ENCODE measurements at regions of chr11 and their contacts with region 1.

Region 1: DNA sequence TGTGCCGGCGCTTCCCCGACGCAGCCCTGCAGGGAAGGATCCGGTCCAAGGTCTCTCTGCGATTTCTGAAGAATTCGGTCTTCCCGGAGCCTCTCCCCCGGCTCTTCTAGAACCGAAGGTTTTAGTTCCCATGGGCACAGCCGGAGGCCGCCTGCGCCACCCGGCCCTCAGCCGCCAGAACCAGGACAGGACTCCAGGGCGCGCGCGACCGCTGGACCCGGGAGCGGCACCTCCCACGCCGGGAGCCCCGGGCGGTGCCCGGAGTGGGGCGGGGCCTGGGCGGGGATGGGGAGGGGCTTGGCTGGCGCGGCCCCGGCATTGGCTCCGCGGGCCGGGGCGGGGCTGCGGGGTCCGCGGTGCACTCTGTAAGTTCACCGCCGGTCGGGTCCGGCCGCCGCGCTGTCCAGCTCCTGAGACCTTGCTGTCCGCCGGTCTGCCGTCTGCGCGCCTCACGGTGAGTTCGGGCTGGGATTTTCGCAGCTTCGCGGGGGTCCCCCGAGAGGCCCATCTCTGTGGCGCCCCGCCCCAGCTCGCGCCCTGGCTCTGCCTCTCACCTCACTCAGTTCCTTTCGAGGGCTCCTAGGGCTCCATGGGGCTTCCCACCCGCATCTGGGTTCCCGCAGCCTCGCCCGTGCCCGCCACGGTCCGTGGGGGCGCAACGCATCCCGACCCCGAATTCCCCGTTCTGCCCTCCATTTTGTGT is at the start of gene CDC42EP2:
- DNase-seq: peak; percentile 51 to 71 (median 58)
- H3K4me3 ChIP-seq: peak within 1 kb of the TSS; percentile 73 to 74
- H3K4me3 Mint-ChIP-seq: peak within 1 kb of the TSS; percentile 72 to 83 (median 76)
- H3K27ac ChIP-seq: peak within 1 kb of the TSS; percentile 49
- H3K27ac Mint-ChIP-seq: peak within 1 kb of the TSS in 1 of 7 donors; percentile 44
- H3K4me1 ChIP-seq: peaks cover 15% of the 10 kb centered on the region
- H3K4me1 Mint-ChIP-seq: peaks cover 4 to 14% (median 7%) of the 10 kb centered on the region in 4 donors
- H3K27me3 ChIP-seq: no peaks in the 10 kb centered on the region
- H3K27me3 Mint-ChIP-seq: no peaks in the 10 kb centered on the region
- total RNA-seq, gene CDC42EP2: 0.55 to 0.67 TPM

Region 2: DNA sequence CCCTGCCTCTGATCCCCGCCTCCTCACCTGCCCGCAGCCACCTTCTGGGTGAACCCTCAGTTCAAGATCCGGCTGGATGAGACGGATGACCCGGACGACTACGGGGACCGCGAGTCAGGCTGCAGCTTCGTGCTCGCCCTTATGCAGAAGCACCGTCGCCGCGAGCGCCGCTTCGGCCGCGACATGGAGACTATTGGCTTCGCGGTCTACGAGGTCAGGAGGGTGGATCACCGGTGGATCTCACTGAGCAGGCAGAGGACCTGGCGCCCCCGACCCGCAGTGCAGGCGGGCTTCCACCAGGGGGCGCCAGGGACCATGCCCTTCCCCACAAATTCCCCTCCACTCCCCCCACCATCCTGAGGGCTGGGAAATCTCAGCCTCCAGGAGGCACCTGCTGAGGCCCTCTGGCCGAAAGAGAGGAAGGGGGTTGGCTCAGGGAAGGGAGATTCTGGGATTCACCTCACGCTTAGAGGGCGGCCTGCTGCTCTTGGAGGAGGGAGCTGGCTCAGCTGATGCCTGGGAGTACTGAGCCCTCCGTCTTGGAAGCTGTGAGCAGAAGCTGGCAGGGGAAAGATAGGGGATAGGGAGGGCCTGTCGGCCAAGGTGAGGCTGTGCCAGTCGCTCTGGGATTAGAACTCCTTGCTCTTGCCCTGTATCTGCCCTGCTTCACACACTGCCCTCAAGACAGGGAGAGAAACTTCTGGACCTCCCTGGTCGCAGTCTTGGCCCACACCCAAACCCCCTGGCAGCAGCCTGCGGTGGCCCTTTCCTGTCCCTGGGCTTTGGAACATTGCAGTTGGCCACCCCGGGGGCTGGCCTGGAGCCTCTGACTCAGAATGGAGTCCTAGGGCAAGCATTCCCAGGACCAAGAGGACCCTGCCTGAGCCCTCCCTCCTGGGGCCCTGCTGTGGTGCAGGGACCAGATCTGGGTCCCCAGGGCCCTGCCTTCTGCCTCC is 109.7 kb before region 1 on chr11:
- CTCF ChIA-PET with region 1: interaction called, 46 read pairs
- POLR2A ChIA-PET with region 1: interaction called, 3 read pairs
- intact Hi-C with region 1: loop called (anchors 1 kb)
- DNase-seq: peak in 4 of 5 donors; percentile 36 to 54 (median 44)
- H3K4me3 ChIP-seq: no peak overlapping the region
- H3K4me3 Mint-ChIP-seq: no peak overlapping the region
- H3K27ac ChIP-seq: no peak overlapping the region
- H3K27ac Mint-ChIP-seq: no peak overlapping the region
- H3K4me1 ChIP-seq: no peaks in the 10 kb centered on the region
- H3K4me1 Mint-ChIP-seq: peaks cover 0 to 6% (median 3%) of the 10 kb centered on the region in 4 donors
- H3K27me3 ChIP-seq: no peaks in the 10 kb centered on the region
- H3K27me3 Mint-ChIP-seq: no peaks in the 10 kb centered on the region

Region 3: GRCh38 chr11:65225279-65226102 is 89.2 kb before region 1 on chr11:
- CTCF ChIA-PET with region 1: interaction called, 103 read pairs
- POLR2A ChIA-PET with region 1: interaction called, 8 read pairs
- intact Hi-C with region 1: loop called (anchors 1 kb)
- DNase-seq: peak; percentile 48 to 75 (median 58)
- H3K4me3 ChIP-seq: no peak overlapping the region
- H3K4me3 Mint-ChIP-seq: peak overlapping the region; percentile 56 to 86 (median 74)
- H3K27ac ChIP-seq: no peak overlapping the region
- H3K27ac Mint-ChIP-seq: peak overlapping the region in 2 of 7 donors; percentile 8 to 13
- H3K4me1 ChIP-seq: peaks cover 13% of the 10 kb centered on the region
- H3K4me1 Mint-ChIP-seq: peaks cover 6 to 13% (median 7%) of the 10 kb centered on the region in 4 donors
- H3K27me3 ChIP-seq: peaks cover 7% of the 10 kb centered on the region
- H3K27me3 Mint-ChIP-seq: peaks cover 5 to 14% of the 10 kb centered on the region in 2 donors

Region 4: GRCh38 chr11:65261591-65262380 is 52.9 kb before region 1 on chr11 and contains the start of gene POLA2:
- CTCF ChIA-PET with region 1: interaction called, 18 read pairs
- POLR2A ChIA-PET with region 1: interaction called, 8 read pairs
- intact Hi-C with region 1: no loop called
- DNase-seq: peak; percentile 95 to 98 (median 98)
- H3K4me3 ChIP-seq: peak within 1 kb of the TSS; percentile 67 to 99
- H3K4me3 Mint-ChIP-seq: peak within 1 kb of the TSS; percentile 92 to 97 (median 93)
- H3K27ac ChIP-seq: peak within 1 kb of the TSS; percentile 92
- H3K27ac Mint-ChIP-seq: peak within 1 kb of the TSS; percentile 94 to 97 (median 96)
- H3K4me1 ChIP-seq: peaks cover 23% of the 10 kb centered on the region
- H3K4me1 Mint-ChIP-seq: peaks cover 28 to 67% (median 36%) of the 10 kb centered on the region in 4 donors
- H3K27me3 ChIP-seq: no peaks in the 10 kb centered on the region
- H3K27me3 Mint-ChIP-seq: no peaks in the 10 kb centered on the region
- total RNA-seq, gene POLA2: 26.4 to 27.3 TPM

Region 5: DNA sequence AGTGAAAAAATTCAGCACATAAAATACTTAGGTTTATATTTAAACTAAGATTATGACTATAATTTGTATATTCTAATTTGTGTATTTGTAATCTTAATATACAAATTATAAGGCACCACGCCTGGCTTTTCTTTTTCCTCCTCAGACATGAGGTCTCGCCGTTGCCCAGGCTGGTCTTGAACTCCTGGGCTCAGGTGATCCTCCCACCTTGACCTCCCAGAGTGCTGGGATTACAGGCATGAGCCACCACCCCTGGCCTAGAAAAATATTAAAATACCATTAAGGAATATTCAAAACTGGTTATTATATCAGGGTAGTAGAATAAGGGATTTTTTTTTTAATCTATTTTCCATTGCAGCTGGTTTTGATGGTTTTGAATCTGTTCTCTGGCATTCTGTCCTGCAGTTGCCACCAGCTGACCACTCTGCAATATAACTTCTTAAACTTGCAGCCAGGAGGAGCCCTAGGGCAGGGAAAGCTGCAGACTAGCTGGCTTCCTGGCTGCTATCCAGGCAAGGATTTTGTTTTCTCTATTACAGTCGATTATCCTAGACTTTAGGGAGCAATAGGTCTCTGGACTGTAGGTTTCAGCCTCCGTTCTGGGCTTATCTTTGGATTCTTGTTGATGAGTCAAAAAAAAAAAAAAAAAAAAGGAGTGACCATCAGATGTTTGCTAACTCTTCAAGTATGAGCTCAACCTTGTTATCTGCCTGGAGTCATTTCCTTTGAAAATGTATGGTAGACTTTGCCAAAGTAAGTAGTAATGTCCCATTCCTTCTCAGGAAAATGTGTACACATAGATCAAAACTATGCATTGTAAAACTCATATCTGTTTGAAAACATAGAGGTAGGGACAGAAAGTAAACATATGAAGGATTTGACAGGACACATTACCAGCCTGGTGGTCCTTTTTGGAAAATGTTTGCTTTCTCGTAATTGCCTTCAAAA is 39.6 kb before region 1 on chr11:
- CTCF ChIA-PET with region 1: interaction called, 115 read pairs
- POLR2A ChIA-PET with region 1: interaction called, 3 read pairs
- intact Hi-C with region 1: loop called (anchors 1 kb)
- DNase-seq: peak; percentile 19 to 39 (median 29)
- H3K4me3 ChIP-seq: no peak overlapping the region
- H3K4me3 Mint-ChIP-seq: no peak overlapping the region
- H3K27ac ChIP-seq: no peak overlapping the region
- H3K27ac Mint-ChIP-seq: peak overlapping the region in 2 of 7 donors; percentile 5 to 11
- H3K4me1 ChIP-seq: peaks cover 8% of the 10 kb centered on the region
- H3K4me1 Mint-ChIP-seq: peaks cover 6 to 12% (median 9%) of the 10 kb centered on the region in 4 donors
- H3K27me3 ChIP-seq: no peaks in the 10 kb centered on the region
- H3K27me3 Mint-ChIP-seq: no peaks in the 10 kb centered on the region

Measured in CD4-positive, alpha-beta memory T cell (primary cell).